Posterior vena cava (tissue), 2 donors: ENCODE measurements at regions of chrX and their contacts with region 1.

Region 1: GRCh38 chrX:13646154-13646549 is 6.8 kb upstream of the TCEANC start:
- DNase-seq: peak; percentile 83

Region 2: DNA sequence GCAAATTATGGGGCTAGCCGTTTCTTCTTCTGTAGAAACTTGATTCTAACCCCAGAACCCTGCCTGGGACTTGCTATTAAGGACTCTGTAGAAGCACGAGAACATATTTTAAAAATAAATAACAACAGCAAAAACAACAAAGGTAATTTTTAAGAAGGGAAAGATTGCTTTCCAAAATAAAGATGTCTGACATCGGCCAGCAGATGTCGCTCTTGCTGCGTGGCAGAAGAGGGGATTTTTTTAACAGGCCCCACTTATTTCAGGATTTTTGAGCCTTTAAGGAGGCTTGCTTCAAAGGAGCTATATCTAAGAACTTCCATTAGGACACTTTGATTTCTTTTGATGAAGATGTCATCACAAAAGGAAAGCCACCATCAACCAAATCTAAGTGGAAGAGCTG is 139.6 kb before region 1 on chrX:
- intact Hi-C with region 1: loop called (anchors 1 to 5 kb)
- DNase-seq: peak; percentile 81